Transverse colon (tissue), 4 donors: ENCODE measurements at regions of chr7 and their contacts with region 1.

Region 1: DNA sequence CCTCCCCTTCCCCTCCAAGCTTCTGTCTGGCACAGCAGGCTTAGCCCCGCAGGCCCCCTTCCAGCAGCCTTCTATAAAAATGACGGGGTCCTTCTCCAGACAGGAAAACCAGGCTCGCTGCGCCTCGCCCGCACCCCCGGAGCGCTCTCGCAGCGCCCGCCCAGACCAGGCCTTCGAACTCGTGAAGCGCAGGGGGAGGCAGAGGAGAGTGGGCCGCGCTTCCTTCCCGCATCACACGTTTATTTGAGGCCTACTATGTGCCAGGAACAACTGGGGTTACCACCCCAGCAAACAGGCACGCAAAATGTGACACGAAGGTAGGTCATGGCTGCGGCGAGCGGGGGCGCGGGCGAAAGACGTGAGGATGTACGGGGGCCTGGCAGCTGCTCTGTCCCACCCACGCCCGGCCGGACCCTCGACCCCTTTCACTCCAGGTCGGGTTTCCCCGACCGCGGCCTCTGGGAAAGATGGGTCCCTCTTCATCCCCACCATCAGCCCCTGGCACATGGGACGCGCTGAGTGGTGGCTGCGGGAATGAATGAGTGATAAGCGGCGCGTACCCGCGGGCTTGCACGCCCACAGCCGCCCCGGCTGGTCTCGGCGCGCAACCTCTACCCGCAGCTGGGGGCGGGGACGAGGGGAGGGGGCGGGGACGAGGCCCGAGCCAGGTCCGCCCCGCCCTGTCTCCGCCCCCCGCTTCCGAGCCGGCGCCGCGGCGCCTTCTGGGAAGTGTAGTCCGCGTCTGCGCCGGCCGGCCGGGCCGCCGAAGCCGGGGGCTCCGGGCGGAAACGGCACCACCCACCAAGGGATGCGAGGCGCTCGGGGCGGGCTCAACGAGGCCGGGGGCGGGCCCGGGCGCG is 59.1 kb downstream of the ZNF467 start:
- DNase-seq: peak; percentile 91
- H3K4me3 ChIP-seq: peak overlapping the region; percentile 37 to 61 (median 54)
- H3K27ac ChIP-seq: peak overlapping the region; percentile 63 to 80 (median 74)
- H3K4me1 ChIP-seq: peaks cover 4 to 23% (median 14%) of the 10 kb centered on the region in 4 donors
- H3K27me3 ChIP-seq: no peaks in the 10 kb centered on the region
- CTCF ChIP-seq: no peak
- EP300 ChIP-seq: no peak
- POLR2A ChIP-seq: no peak

Region 2: GRCh38 chr7:149028346-149029109 is 685.8 kb before region 1 on chr7 and contains the start of gene PDIA4:
- in situ Hi-C with region 1: no loop called
- intact Hi-C with region 1: loop called (anchors 10 kb)
- DNase-seq: peak; percentile 100
- H3K4me3 ChIP-seq: peak within 1 kb of the TSS; percentile 86 to 98 (median 92)
- H3K27ac ChIP-seq: peak within 1 kb of the TSS; percentile 95 to 98 (median 97)
- H3K4me1 ChIP-seq: peaks cover 7 to 29% (median 16%) of the 10 kb centered on the region in 4 donors
- H3K27me3 ChIP-seq: no peaks in the 10 kb centered on the region
- CTCF ChIP-seq: peak in 2 of 5 experiments; percentile 20 to 48
- EP300 ChIP-seq: no peak
- POLR2A ChIP-seq: peak; percentile 85
- total RNA-seq, gene PDIA4: 44.5 to 79.5 (median 74.7) TPM

Region 3: DNA sequence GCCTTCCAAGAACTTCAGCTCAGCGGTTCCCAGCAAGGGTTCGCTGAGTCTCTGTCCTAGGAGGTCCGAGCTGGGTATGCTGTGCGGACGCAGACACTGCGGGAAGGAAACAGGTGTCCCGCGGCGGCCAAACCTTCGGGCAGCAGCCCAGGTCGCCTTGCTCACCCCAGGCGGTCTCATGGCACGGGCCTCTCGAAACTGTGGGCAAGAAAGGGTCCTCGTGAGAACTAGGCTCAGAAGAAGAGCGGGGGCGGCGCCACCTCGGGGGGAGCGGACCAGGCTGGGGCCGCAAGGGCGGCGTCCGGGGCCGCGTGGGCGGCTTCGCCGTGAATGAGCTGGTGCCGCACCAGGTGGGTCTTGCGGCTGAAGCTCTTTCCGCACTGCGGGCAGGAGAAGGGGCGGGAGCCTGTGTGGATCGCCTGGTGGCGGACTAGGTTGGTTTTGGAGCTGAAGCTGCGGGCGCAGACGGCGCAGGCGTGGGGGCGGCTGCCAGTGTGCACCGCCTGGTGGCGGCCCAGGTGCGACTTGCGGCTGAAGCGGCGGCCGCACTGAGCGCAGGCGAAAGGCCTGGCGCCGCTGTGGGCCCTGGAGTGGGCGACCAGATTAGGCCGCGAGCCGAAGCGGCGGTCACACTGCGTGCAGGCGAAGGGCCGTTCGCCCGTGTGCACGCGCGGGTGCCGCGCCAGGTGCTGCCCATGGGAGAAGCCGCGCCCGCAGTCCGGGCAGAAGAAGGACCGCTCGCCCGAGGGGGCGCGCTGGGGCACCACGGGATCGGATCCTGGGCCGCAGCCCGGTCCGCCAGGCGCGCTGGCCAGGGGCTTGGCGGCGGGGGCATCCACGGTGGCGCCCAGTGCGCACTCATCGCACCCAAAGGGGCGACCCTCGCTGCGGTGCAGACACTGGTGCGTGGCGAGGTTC is 50.5 kb after region 1 on chr7:
- in situ Hi-C with region 1: no loop called
- intact Hi-C with region 1: no loop called
- DNase-seq: no peak
- H3K4me3 ChIP-seq: no peak overlapping the region
- H3K27ac ChIP-seq: no peak overlapping the region
- H3K4me1 ChIP-seq: no peaks in the 10 kb centered on the region
- H3K27me3 ChIP-seq: peaks cover 42% of the 10 kb centered on the region
- CTCF ChIP-seq: peak in 2 of 5 experiments; percentile 9
- EP300 ChIP-seq: no peak
- POLR2A ChIP-seq: no peak